Psoas muscle (tissue), 8 donors: ENCODE measurements at regions of chr20 and their contacts with region 1.

Region 1: DNA sequence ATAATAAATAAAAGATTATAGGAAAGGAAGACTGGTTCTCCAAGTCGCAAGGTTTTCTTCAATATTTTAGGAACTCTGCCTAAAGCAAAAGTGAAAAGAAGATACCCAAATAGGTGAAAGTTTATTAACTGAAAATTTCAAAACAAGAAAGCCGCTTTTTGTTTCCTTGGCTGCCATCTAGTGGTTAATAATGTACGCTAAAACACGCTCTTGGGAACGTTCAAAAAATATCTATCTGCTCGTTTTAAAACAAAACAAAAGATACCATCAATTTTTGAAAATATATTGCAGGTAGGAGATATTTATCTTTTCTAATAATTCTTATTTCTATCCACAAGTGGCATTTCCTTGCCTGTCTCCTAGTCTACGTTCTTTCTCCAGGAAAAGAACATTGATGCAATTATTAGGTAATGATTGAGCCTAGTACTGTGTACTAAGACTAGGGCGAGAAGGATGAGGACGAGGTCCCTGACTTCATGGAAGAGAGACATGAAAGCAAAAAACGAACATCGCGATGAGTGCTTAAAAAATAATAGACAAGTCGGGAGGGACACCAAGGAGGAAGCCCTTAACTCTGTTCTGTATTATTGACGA is 97.2 kb downstream of the SPTLC3 start:
- DNase-seq: no peak
- ATAC-seq: no peak
- H3K4me3 ChIP-seq: no peak overlapping the region
- H3K27ac ChIP-seq: no peak overlapping the region
- H3K4me1 ChIP-seq: no peaks in the 10 kb centered on the region
- H3K27me3 ChIP-seq: no peaks in the 10 kb centered on the region
- CTCF ChIP-seq: peak; percentile 77

Region 2: DNA sequence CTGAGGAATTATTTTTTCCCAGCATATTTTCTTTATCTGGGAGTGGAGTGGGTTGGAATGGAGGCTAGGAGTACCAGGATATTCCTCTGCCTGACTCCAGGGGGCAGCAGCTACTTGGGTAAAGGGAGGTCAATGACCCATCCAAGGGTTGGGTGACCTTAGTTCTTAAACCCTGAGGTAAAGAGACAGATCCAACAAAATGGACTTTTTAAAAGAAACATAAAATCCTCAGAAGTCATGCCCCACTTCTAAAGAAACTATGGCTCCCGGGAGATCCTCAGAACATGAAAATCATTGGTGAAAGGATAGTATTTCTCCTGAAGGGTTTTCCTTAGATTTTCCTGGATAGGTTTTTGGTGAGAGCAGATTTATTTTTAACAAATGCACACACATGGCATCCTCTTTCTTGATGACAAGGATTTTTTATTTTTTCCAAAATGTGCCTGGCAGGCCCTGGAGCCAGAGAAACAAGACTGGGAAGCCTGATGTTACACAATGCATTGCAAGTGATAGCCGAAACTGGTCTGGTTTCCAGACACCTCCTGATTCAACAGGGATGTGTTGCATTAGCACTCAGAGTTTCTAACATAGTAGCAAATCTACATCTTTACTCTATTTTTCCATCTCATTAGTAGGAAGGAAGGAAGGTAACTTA is 1429.2 kb before region 1 on chr20:
- intact Hi-C with region 1: loop called (anchors 2 to 5 kb)
- DNase-seq: peak; percentile 26 to 59
- ATAC-seq: peak; percentile 73 to 87 (median 81)
- H3K4me3 ChIP-seq: no peak overlapping the region
- H3K27ac ChIP-seq: no peak overlapping the region
- H3K4me1 ChIP-seq: no peaks in the 10 kb centered on the region
- H3K27me3 ChIP-seq: peaks cover 0 to 6% (median 0%) of the 10 kb centered on the region in 3 donors
- CTCF ChIP-seq: peak; percentile 82

Region 3: DNA sequence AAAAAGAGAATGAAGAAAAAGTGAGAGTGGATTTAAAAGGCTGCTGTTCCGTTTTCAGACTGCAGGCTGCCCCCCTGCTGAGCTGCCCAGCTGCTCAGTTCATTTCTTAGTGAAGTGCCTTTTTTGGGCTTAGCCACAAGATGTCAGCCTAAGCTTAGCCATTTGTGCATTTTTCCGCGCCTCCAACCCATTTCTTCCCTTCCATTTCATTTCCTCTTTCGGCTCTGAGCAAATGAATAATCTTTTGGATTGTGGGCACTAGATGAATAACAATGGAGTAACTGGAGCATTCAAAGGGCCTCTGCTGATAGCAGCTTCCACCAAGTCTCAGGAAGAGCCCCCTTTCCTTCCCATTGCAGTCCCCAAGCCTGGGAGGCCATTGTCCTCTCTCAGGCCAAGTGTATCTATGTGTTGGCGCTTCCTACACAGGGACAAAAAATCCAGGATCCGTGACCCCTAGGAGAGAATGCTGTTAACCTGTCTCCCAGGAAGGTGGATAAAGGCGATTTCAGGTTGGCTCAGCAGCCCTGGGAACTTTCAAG is 180.7 kb before region 1 on chr20:
- intact Hi-C with region 1: loop called in 1 of 2 experiments (anchors 5 kb)
- DNase-seq: no peak
- ATAC-seq: peak in 3 of 4 donors; percentile 47 to 69 (median 66)
- H3K4me3 ChIP-seq: no peak overlapping the region
- H3K27ac ChIP-seq: no peak overlapping the region
- H3K4me1 ChIP-seq: no peaks in the 10 kb centered on the region
- H3K27me3 ChIP-seq: no peaks in the 10 kb centered on the region
- CTCF ChIP-seq: peak; percentile 65

Region 4: DNA sequence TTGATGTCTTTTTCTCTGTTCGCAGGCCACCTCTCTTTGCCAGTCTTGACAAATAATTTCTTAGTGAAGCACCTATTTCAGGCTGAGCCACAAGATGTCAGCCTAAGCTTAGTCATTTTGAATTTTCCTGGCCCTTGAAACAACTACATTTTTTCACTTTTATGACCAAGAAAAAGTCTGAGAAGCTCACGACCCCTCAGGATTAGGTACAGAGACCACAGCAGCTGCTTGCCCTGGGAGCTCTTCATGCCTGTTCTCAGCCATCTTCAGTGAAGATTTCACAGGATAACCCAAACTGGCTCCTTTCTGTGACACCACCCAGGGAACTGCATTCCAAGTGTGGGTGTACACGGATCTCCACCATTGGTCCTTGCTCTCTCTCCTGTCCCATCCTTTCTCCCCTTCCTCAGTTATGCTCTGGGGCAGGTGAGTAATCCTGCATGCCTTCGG is 135.6 kb before region 1 on chr20:
- intact Hi-C with region 1: loop called in 1 of 2 experiments (anchors 2 kb)
- DNase-seq: no peak
- ATAC-seq: no peak
- H3K4me3 ChIP-seq: no peak overlapping the region
- H3K27ac ChIP-seq: no peak overlapping the region
- H3K4me1 ChIP-seq: no peaks in the 10 kb centered on the region
- H3K27me3 ChIP-seq: no peaks in the 10 kb centered on the region
- CTCF ChIP-seq: peak; percentile 38